ENCODE measurements at regions of chr1 and their contacts with region 1.

Region 1: GRCh38 chr1:228082135-228082891 is at the start of gene ARF1:
- DNase-seq: peak; percentile 92 to 95 (median 92)
- H3K4me3 ChIP-seq: peak within 1 kb of the TSS; percentile 95 to 100 (median 98)
- H3K27ac ChIP-seq: peak within 1 kb of the TSS; percentile 94 to 100 (median 100)
- H3K4me1 ChIP-seq: peaks cover 38 to 44% of the 10 kb centered on the region in 2 donors
- H3K27me3 ChIP-seq: no peaks in the 10 kb centered on the region
- CTCF ChIP-seq: peak in 2 of 6 experiments; percentile 21 to 39
- POLR2A ChIP-seq: peak; percentile 85 to 88
- total RNA-seq, gene ARF1: 200 to 611 (median 378) TPM

Region 2: DNA sequence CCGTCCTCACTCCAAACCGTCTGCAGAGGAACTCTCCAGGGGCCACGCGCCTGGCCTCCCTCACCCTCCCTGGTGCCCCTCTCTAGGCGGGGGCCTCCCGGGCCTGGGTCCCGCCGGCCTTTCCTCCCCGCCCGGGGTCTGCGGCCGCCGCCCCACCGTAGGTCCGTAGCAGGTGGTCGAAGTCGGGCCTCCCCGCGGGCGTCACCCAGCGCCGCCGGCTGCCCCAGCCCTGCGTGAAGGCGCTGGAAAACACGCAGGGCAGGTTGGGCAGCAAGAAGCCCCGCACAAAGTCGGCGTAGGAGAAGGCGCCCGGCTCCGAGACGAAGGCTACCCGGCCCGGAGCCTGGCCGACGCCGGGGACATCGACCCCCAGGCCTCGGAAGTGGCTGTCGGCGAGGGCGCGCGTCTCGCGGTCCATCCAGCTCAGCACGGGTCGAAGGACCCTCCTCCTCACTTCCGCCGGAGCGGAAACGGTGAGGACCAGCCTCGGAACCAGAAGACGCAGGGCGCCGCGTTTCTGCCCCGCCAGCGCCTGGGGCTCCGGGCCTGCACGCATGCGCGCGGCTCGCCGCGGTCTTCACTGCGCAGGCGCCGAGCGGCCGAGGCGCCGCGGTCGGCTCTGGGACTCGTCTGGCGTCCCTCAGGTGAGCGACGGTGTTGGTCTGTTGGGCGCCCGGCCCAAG is 347.3 kb before region 1 on chr1 and contains the starts of genes JMJD4 and SNAP47:
- intact Hi-C with region 1: loop called in 1 of 2 experiments (anchors 10 kb)
- DNase-seq: peak; percentile 91 to 95 (median 93)
- H3K4me3 ChIP-seq: peak within 1 kb of the TSS; percentile 43 to 96 (median 79)
- H3K27ac ChIP-seq: peak within 1 kb of the TSS; percentile 62 to 90 (median 83)
- H3K4me1 ChIP-seq: peaks cover 16 to 46% of the 10 kb centered on the region in 2 donors
- H3K27me3 ChIP-seq: no peaks in the 10 kb centered on the region
- CTCF ChIP-seq: no peak
- POLR2A ChIP-seq: peak; percentile 66 to 78
- total RNA-seq, gene JMJD4: 19.7 to 57.5 (median 29.2) TPM
- total RNA-seq, gene SNAP47: 40.5 to 216 (median 109) TPM

Region 3: GRCh38 chr1:228265167-228265566 is 182.9 kb after region 1 on chr1:
- intact Hi-C with region 1: no loop called
- DNase-seq: no peak
- H3K4me3 ChIP-seq: no peak overlapping the region
- H3K27ac ChIP-seq: no peak overlapping the region
- H3K4me1 ChIP-seq: no peaks in the 10 kb centered on the region
- H3K27me3 ChIP-seq: no peaks in the 10 kb centered on the region
- CTCF ChIP-seq: peak in 4 of 6 experiments; percentile 14 to 17 (median 15)
- POLR2A ChIP-seq: no peak